ENCODE measurements at regions of chr16 and their contacts with region 1.

Region 1: GRCh38 chr16:19067349-19068236 is at the start of gene COQ7:
- DNase-seq: peak; percentile 99
- H3K4me3 Mint-ChIP-seq: peak within 1 kb of the TSS; percentile 90
- H3K27ac Mint-ChIP-seq: peak within 1 kb of the TSS; percentile 99
- H3K4me1 Mint-ChIP-seq: peaks cover 12% of the 10 kb centered on the region
- H3K27me3 Mint-ChIP-seq: no peaks in the 10 kb centered on the region
- CTCF ChIP-seq: no peak
- total RNA-seq, gene COQ7: 19.0 and 21.4 TPM in 2 replicates

Region 2: GRCh38 chr16:18932243-18932981 is 135.2 kb before region 1 on chr16:
- CTCF ChIA-PET with region 1: interaction called, 4 read pairs
- POLR2A ChIA-PET with region 1: interaction called, 3 read pairs
- intact Hi-C with region 1: loop called (anchors 5 kb)
- DNase-seq: peak; percentile 39
- H3K4me3 Mint-ChIP-seq: no peak overlapping the region
- H3K27ac Mint-ChIP-seq: peak overlapping the region; percentile 49
- H3K4me1 Mint-ChIP-seq: peaks cover 10% of the 10 kb centered on the region
- H3K27me3 Mint-ChIP-seq: no peaks in the 10 kb centered on the region
- CTCF ChIP-seq: no peak

Region 3: GRCh38 chr16:18975109-18975508 is 92.5 kb before region 1 on chr16:
- CTCF ChIA-PET with region 1: interaction called, 16 read pairs
- POLR2A ChIA-PET with region 1: interaction called, 5 read pairs
- intact Hi-C with region 1: no loop called
- DNase-seq: no peak
- H3K4me3 Mint-ChIP-seq: no peak overlapping the region
- H3K27ac Mint-ChIP-seq: no peak overlapping the region
- H3K4me1 Mint-ChIP-seq: peaks cover 4% of the 10 kb centered on the region
- H3K27me3 Mint-ChIP-seq: no peaks in the 10 kb centered on the region
- CTCF ChIP-seq: no peak

Region 4: GRCh38 chr16:18999045-18999393 is 68.6 kb before region 1 on chr16:
- CTCF ChIA-PET with region 1: interaction called, 3 read pairs
- POLR2A ChIA-PET with region 1: interaction called, 14 read pairs
- intact Hi-C with region 1: loop called (anchors 1 kb)
- DNase-seq: no peak
- H3K4me3 Mint-ChIP-seq: no peak overlapping the region
- H3K27ac Mint-ChIP-seq: peak overlapping the region; percentile 88
- H3K4me1 Mint-ChIP-seq: peaks cover 25% of the 10 kb centered on the region
- H3K27me3 Mint-ChIP-seq: no peaks in the 10 kb centered on the region
- CTCF ChIP-seq: no peak

Region 5: DNA sequence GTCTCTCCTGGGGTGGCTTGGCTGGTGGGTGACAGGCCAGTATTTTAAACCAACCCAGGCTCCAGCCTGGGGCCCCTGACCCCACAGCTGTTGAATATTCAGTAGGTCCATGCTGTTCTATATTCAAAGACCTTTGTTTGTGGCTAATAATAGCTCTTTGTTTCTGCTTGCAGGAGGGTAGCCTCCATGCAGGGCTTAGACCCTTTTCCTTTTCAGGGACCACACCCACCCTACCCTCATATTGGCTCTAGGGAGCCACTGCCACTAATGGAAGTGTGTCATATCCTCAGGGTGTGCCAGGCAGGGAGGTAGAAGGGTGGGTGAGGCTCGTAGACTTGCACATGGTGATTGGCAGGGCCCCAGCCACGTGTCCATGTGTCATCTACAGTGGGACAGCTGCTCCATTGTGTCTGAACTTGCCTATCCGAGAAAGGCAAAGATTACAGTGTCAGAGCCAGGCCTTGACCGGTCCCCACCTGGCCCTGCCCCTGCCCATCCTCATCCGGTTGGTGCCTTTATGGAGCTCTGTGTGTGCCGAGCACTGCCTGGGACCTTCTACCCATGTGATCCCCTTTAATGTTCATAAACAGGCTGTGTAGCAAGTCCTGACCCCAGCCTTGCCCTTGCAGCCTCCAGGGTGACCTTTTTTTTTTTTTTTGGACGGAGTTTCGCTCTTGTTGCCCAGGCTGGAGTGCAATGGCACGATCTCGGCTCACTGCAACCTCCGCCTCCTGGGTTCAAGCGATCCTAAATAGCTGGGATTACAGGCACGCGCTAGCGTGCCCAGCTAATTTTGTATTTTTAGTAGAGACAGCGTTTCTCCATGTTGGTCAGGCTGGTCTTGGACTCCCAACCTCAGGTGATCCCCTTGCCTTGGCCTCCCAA is 61.8 kb before region 1 on chr16:
- CTCF ChIA-PET with region 1: interaction called, 10 read pairs
- POLR2A ChIA-PET with region 1: interaction called, 16 read pairs
- intact Hi-C with region 1: no loop called
- DNase-seq: peak; percentile 96
- H3K4me3 Mint-ChIP-seq: peak overlapping the region; percentile 8
- H3K27ac Mint-ChIP-seq: peak overlapping the region; percentile 82
- H3K4me1 Mint-ChIP-seq: peaks cover 34% of the 10 kb centered on the region
- H3K27me3 Mint-ChIP-seq: no peaks in the 10 kb centered on the region
- CTCF ChIP-seq: no peak